Posterior cingulate gyrus (tissue), 11 donors: ENCODE measurements at regions of chr5 and their contacts with region 1.

Region 1: GRCh38 chr5:127923804-127924570 is 159.6 kb upstream of the SLC12A2 start:
- DNase-seq: no peak

Region 2: DNA sequence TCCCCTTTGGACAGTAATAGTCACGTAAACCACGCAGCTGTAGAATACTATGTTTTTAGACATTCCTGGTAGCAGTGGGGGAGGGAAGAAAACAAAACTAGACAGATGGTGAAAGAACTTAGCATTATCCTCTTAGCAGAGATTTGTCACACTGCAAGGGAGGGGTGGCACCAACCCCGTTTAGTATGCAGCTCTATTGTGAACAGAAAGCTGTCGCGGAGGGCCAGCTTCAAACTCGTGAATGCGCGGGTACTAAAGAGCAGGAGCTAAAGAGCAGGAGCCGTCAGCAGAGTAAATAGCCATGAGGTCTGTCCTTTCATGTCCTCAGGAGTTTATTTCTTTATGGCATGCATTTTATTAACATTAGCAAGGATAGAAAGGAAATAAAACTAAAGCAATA is 17.7 kb after region 1 on chr5:
- intact Hi-C with region 1: loop called (anchors 1 kb)
- DNase-seq: peak; percentile 24 to 93 (median 52)